ENCODE measurements at regions of chr15 and their contacts with region 1.

Region 1: GRCh38 chr15:80418892-80419537 is 14.8 kb downstream of the ARNT2 start:
- DNase-seq: peak; percentile 26
- H3K4me3 ChIP-seq: no peak overlapping the region
- H3K27ac ChIP-seq: peak overlapping the region; percentile 82
- H3K27me3 ChIP-seq: no peaks in the 10 kb centered on the region
- CTCF ChIP-seq: peak; percentile 82

Region 2: DNA sequence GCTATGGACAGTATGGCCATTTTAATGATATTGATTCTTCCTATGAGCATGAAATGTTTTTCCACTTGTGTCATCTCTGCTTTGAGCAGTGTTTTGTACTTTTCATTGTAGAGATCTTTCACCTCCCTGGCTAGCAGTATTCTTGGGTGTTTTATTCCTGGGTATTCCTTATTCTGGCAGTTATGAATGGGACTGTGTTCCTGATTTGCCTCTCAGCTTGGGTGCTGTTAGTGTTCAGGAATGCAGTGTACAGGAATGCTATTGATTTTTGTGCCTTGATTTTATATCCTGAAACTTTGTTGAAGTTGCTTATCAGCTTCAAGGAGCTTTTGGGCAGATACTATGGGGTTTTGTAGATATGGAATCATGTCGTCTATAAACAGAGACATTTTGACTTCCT is 117.5 kb before region 1 on chr15:
- CTCF ChIA-PET with region 1: no interaction called
- POLR2A ChIA-PET with region 1: no interaction called
- DNase-seq: no peak
- H3K4me3 ChIP-seq: no peak overlapping the region
- H3K27ac ChIP-seq: no peak overlapping the region
- H3K27me3 ChIP-seq: peaks cover 4% of the 10 kb centered on the region
- CTCF ChIP-seq: no peak

Region 3: GRCh38 chr15:80404057-80404715 is 14.8 kb before region 1 on chr15 and contains the start of gene ARNT2:
- CTCF ChIA-PET with region 1: interaction called, 14 read pairs
- POLR2A ChIA-PET with region 1: no interaction called
- DNase-seq: no peak
- H3K4me3 ChIP-seq: peak within 1 kb of the TSS; percentile 69
- H3K27ac ChIP-seq: peak within 1 kb of the TSS; percentile 21
- H3K27me3 ChIP-seq: no peaks in the 10 kb centered on the region
- CTCF ChIP-seq: no peak
- polyA plus RNA-seq, gene ARNT2: 36.8 and 42.8 TPM in 2 replicates